Motor neuron (in vitro differentiated cells): ENCODE measurements at regions of chr1 and their contacts with region 1.

Region 1: DNA sequence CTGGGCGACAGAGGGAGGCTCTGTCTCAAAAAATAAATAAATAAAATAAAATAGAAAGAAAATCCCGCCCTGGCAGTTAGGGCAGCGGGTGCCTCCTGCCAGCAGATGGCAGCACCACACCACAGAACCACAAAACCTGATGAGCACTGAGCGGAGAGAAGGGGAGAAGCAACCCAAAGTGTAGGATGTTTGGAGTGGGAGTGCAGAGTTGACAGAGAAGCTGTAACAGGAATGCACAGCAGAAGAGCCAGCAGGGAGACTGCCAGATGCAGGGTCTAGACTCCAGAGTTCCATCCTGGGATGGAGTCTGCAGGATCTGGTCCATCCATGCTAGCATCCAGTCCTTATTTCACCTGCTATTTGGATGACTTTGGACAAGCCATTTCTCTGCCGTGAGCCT is 29.7 kb upstream of the KIRREL1 start:
- ATAC-seq: peak; percentile 26 to 97 (median 56)
- H3K4me3 ChIP-seq: no peak overlapping the region
- H3K27ac ChIP-seq: no peak overlapping the region
- H3K4me1 ChIP-seq: peaks cover 31 to 36% of the 10 kb centered on the region in 2 donors

Region 2: GRCh38 chr1:157580179-157580827 is 383.4 kb before region 1 on chr1:
- in situ Hi-C with region 1: loop called in 1 of 9 experiments (anchors 25 kb)
- ATAC-seq: peak in 7 of 8 experiments; percentile 39 to 71 (median 55)
- H3K4me3 ChIP-seq: no peak overlapping the region
- H3K27ac ChIP-seq: no peak overlapping the region
- H3K4me1 ChIP-seq: peaks cover 2% of the 10 kb centered on the region in 2 donors

Region 3: DNA sequence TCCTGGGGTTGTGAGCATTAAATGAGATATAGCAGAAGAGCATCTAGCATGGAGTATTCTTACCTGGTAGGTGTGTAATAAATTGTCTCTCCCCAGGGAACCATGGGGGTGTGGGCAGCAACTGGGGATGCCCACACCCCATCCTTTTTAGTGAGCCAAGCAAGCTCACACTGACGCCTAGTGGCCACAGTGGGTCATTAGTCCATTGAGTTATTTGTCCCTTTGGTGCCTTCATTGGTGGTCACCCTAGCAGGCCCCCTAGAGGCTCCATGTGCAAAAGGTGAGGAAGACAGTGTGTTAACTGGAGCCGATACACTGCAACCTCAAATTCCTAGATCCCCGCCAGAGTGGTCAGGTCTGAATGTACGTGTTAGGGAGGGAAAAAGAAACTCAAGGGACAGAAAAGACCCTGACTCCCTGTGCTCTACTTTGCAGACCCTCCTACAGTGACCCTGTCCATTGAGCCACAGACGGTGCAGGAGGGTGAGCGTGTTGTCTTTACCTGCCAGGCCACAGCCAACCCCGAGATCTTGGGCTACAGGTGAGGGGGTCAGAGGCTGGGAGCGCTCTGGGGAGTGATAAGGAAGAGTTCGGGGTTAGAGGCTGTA is 123.7 kb after region 1 on chr1:
- in situ Hi-C with region 1: no loop called
- ATAC-seq: peak; percentile 35 to 94 (median 78)
- H3K4me3 ChIP-seq: no peak overlapping the region
- H3K27ac ChIP-seq: no peak overlapping the region
- H3K4me1 ChIP-seq: peaks cover 13 to 18% of the 10 kb centered on the region in 2 donors

Region 4: DNA sequence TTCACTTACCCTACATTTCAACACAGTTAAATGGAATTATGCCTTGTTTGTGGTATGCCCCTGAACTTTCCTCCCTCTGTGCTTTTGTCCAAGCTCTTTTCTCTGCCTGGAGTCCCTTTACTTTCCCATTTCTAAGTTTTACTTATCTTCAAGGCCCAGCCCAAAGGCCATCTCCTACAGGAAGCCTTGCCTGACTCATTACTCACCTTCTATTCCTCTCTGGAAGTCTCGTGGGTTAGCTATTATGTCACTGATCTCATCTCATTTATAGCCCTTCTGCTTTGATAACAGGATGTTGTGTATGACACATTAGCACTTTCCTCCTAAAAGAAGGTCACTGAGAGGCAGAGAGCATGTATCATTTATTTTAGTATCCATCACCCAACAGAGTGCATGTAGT is 138.2 kb after region 1 on chr1:
- in situ Hi-C with region 1: no loop called
- ATAC-seq: peak; percentile 8 to 87 (median 70)
- H3K4me3 ChIP-seq: no peak overlapping the region
- H3K27ac ChIP-seq: no peak overlapping the region
- H3K4me1 ChIP-seq: peaks cover 65 to 81% of the 10 kb centered on the region in 2 donors

Region 5: DNA sequence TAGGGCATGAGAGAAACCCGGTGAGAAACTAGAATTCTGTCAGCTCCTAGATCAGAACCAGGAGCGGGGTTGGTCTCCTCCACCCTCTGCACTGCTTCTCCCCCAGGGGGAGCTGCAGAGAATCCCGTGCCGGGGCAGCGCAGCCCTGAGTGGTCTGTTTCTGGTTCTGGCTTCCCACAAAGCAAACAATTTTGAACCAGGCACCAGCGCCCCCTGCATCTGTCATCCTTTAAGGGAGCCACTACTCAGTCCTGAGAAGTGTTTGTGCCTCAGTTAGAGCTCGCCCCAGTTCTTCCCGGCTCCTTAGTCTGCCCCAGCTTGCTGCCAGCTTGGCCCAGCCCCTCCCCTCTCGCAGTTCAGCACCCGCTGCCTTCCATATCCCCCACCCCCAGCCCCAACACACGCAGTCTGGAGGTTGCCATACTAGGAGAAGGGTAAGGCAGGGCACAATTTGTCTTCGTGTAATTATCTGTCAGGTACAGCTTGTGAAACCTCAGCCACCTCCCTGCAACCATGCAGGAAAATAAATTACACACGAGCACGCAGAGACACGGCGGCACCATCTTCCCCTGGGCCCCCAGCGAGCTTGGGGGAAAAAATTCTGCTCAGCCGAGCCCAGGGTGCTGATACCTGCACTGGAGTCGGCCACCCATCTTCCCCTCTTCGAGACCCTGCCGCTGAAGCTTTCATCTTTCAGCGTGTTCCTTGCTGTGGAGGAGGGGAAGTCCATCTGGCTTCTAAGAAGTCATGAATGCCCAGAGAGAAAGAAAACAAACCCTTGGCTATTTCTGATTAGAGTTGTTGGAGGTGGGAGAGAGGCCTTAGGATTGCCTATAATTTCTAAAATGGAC is 154.4 kb after region 1 on chr1:
- in situ Hi-C with region 1: loop called in 6 of 9 experiments (anchors 5 to 10 kb)
- ATAC-seq: peak; percentile 20 to 83 (median 68)
- H3K4me3 ChIP-seq: peak overlapping the region; percentile 3 to 8 (median 6)
- H3K27ac ChIP-seq: peak overlapping the region; percentile 75 to 93
- H3K4me1 ChIP-seq: peaks cover 54 to 65% of the 10 kb centered on the region in 2 donors

Region 6: GRCh38 chr1:158527190-158527815 is 563.6 kb after region 1 on chr1:
- in situ Hi-C with region 1: loop called in 1 of 9 experiments (anchors 25 kb)
- ATAC-seq: peak in 4 of 8 experiments; percentile 39 to 94 (median 76)
- H3K4me3 ChIP-seq: no peak overlapping the region
- H3K27ac ChIP-seq: no peak overlapping the region
- H3K4me1 ChIP-seq: no peaks in the 10 kb centered on the region